ENCODE measurements at regions of chr2 and their contacts with region 1.

Region 1: DNA sequence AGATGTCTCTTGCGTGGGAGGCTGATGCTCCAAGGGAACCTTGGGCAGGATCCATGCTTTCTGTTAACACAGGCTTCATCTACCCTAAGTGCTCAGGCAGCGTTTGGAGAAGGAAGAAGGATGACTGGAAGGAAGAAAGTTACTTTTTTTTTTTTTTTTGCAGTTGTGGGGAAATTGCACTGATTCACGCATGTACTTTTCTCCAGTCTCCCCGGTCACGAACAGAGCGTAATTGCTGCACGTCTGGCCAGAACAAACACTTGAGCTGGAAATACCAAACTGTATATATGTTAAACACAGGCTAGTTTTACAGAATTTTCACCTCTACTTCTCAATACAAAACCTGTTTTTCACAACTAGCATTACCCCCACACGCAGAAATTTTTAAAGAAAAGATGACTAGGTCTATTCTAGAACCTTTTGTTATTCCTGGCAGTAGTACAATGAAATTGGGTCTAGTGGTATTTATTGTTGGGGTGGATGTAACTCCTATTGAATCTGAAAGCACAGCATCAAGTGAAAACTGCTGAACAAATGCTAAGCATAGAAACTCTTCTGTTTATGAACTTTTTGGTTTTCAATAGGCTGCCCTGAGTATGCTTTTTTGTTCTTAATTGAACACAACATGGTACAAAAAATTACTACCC is 9.3 kb upstream of the SCYGR5 start:
- DNase-seq: no peak
- ATAC-seq: no peak
- H3K4me3 Mint-ChIP-seq: no peak overlapping the region
- H3K27ac Mint-ChIP-seq: no peak overlapping the region
- H3K4me1 Mint-ChIP-seq: no peaks in the 10 kb centered on the region
- H3K27me3 Mint-ChIP-seq: peaks cover 25% of the 10 kb centered on the region

Region 2: DNA sequence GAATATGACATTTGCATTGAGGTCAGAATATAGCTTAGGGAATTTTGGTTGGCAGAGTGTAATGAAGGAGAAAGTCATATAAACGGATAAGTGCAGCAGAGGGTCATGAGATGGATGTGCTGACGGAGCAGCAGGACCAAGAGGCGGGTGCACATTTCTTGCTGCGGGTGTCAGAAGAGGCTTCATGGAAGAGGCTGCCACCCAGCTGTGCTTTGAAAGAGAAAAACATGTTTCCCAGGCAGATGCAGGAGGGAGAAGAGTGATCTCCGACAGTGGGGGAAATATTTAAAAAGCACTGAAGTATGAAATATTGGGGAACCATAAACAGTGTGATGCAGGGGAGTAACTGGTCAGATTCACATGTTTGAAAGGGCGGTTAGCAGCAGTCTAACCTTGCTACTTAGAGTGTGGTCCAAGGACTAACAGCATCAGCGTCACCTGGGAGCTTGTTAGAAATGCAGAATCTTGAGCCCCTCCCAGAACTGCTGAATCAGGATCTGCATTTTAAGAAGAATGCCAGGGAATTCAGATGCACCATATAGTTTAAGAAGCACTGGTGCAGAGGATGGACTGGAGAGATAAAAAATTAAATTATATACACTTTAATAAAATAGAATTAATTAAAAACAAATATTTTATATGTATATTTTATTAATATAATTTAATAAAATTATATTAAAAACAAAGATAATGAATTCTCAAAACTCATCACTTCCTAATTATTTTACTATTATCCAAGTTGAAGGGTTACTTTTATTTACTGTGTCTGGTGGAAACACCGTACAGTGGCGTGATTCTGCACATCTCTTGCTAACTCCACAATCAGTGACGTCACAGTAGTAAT is 233.4 kb before region 1 on chr2:
- CTCF ChIA-PET with region 1: no interaction called
- DNase-seq: no peak
- ATAC-seq: no peak
- H3K4me3 Mint-ChIP-seq: no peak overlapping the region
- H3K27ac Mint-ChIP-seq: no peak overlapping the region
- H3K4me1 Mint-ChIP-seq: no peaks in the 10 kb centered on the region
- H3K27me3 Mint-ChIP-seq: no peaks in the 10 kb centered on the region

Region 3: DNA sequence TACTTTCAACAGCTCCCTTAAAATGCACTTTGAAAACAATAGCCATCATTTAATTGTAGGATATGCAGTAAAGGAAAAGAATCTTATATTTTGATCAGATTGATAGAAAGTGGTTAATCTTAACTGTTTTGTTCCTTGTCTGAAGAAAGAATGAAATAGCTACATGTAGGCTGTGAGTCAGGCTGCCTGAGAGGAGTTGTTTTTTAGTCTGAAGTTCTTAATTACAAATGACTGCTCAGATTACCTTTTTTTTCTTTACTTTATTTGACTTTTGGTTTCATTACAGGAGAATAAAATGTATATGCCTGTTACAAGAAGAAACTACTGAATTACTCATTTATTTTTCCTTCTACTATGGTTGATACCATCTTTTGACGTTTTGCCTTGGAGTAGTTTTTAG is 128.5 kb before region 1 on chr2:
- CTCF ChIA-PET with region 1: no interaction called
- DNase-seq: no peak
- ATAC-seq: no peak
- H3K4me3 Mint-ChIP-seq: no peak overlapping the region
- H3K27ac Mint-ChIP-seq: no peak overlapping the region
- H3K4me1 Mint-ChIP-seq: peaks cover 2% of the 10 kb centered on the region
- H3K27me3 Mint-ChIP-seq: no peaks in the 10 kb centered on the region

Region 4: DNA sequence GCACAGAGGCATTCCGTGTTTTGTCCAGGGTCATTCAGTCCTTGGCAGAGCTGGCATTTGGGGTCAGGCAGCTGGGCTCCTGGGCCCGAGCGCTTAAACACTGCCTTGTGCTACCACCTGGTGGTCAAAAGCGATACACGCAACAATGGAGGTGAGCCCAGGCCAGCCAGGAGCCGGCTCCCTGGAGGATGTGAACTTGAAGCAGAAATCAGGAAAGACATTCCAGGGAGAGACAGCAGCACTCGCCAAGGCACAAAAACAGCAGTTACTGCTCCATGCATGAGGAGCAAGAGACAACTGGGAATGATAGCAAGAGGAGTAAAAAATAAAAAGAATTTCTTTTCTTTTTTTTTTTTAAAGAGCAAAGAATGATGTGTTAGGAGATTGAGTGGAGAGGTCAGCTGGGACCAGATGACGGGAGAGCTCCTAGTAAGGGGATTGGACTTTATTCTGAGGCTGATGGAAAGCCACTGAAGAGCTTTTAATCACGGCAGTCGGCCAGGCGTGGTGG is 109.1 kb after region 1 on chr2:
- CTCF ChIA-PET with region 1: interaction called, 28 read pairs
- DNase-seq: peak; percentile 68
- ATAC-seq: peak; percentile 78
- H3K4me3 Mint-ChIP-seq: no peak overlapping the region
- H3K27ac Mint-ChIP-seq: no peak overlapping the region
- H3K4me1 Mint-ChIP-seq: peaks cover 2% of the 10 kb centered on the region
- H3K27me3 Mint-ChIP-seq: peaks cover 2% of the 10 kb centered on the region

Region 5: GRCh38 chr2:227862227-227862740 is 205.0 kb after region 1 on chr2:
- CTCF ChIA-PET with region 1: interaction called, 15 read pairs
- DNase-seq: no peak
- ATAC-seq: no peak
- H3K4me3 Mint-ChIP-seq: no peak overlapping the region
- H3K27ac Mint-ChIP-seq: no peak overlapping the region
- H3K4me1 Mint-ChIP-seq: no peaks in the 10 kb centered on the region
- H3K27me3 Mint-ChIP-seq: no peaks in the 10 kb centered on the region